Activated B cell treated with CpG ODN at 0.5 μM for 24 hours (primary cell): ENCODE measurements at regions of chr3 and their contacts with region 1.

Region 1: DNA sequence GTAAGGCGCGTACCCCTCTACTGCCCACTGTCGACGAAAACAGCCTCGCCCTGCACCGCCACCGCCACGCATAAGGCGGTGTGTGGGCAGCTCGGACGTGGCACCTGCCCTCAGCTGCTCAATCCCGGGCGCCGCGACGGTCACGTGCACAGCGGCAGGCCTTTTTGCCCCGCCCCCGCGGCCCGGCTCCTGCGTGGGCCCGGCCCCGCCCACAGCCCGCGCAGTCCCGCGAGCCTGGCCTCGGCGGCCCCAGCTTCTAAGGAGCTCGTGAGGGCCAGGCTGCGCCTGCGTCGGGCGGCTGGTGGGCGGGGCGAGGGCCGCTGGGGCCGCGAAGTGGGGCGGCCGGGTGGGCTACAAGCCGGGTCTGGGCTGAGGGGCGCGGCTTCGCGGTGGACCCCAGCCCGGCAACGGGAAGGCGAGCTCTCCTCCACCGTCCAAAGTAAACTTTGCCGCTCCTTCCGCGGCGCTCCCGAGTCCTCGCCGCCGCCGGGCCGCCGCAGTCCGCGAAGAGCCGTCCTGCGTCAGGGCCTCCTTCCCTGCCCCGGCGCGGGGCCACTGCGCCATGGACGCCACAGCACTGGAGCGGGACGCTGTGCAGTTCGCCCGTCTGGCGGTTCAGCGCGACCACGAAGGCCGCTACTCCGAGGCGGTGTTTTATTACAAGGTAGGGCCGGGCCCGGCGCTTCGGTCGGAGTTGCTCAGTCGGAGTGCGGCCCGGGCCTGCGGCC is at the start of gene CAPN7:
- DNase-seq: peak; percentile 97
- ATAC-seq: peak; percentile 90
- H3K4me3 Mint-ChIP-seq: peak within 1 kb of the TSS; percentile 89
- H3K27ac Mint-ChIP-seq: peak within 1 kb of the TSS; percentile 87
- H3K4me1 Mint-ChIP-seq: peaks cover 24% of the 10 kb centered on the region
- H3K27me3 Mint-ChIP-seq: no peaks in the 10 kb centered on the region
- CTCF ChIP-seq: no peak
- total RNA-seq, gene CAPN7: 35.0 and 45.1 TPM in 2 replicates

Region 2: GRCh38 chr3:14921078-14921616 is 285.0 kb before region 1 on chr3:
- CTCF ChIA-PET with region 1: interaction called, 14 read pairs
- POLR2A ChIA-PET with region 1: no interaction called
- intact Hi-C with region 1: loop called (anchors 2 kb)
- DNase-seq: peak; percentile 72
- ATAC-seq: peak; percentile 98
- H3K4me3 Mint-ChIP-seq: no peak overlapping the region
- H3K27ac Mint-ChIP-seq: no peak overlapping the region
- H3K4me1 Mint-ChIP-seq: no peaks in the 10 kb centered on the region
- H3K27me3 Mint-ChIP-seq: peaks cover 5% of the 10 kb centered on the region
- CTCF ChIP-seq: peak; percentile 40

Region 3: DNA sequence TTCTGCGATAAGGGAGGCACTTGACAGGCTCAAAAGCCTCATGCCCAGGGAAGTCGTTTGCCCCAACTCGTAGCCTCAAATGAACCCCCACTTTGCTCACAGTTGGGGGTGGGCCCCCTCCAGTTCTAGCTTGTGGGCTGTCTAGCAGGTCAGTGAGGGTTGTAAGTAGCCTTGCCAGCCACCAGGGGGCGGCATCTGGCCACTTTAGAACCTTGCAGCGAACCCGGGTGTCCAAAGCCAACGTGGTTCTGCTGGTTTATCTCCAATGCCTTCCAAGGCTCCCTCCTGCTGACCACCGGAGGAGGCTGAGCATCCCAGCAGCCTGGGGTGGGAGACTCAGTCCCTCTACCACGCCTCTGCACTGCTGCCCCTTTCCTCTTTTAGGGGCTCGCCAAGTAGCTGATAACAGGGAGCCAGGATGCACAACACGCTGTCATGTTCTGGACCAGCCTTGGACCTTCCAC is 98.0 kb before region 1 on chr3:
- CTCF ChIA-PET with region 1: interaction called, 18 read pairs
- POLR2A ChIA-PET with region 1: interaction called, 3 read pairs
- intact Hi-C with region 1: loop called (anchors 2 kb)
- DNase-seq: peak; percentile 66
- ATAC-seq: peak; percentile 98
- H3K4me3 Mint-ChIP-seq: no peak overlapping the region
- H3K27ac Mint-ChIP-seq: no peak overlapping the region
- H3K4me1 Mint-ChIP-seq: peaks cover 2% of the 10 kb centered on the region
- H3K27me3 Mint-ChIP-seq: peaks cover 7% of the 10 kb centered on the region
- CTCF ChIP-seq: peak; percentile 69

Region 4: DNA sequence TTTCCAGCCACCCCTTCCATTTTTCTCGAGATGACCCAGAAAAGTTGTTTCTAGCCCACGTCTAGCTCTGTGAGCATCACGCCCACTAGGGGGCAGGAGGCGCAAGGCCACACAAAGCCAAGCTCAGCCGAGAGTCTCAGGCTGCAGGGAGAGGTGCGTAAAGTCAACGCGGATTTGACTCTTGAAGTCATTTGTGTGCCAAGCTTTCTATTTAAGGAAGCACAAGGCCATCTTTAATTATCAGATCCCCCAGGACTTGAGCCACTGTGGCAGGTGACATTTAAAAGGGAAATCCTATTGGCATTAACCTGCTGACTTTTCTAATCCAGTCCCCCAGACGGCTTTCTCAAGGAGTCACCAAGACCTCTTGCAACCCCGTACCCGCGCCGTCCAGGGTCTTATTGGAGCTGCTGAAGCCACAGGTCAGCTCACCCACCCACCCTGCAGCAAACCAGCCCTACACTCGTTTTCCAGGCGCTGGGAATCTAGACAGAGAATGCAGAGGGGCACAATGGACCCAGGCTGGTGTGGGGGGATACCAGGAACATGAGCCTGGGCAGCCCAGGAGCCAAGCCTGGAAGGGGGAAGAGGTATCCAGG is 62.0 kb after region 1 on chr3:
- CTCF ChIA-PET with region 1: interaction called, 23 read pairs
- POLR2A ChIA-PET with region 1: interaction called, 7 read pairs
- intact Hi-C with region 1: loop called (anchors 2 kb)
- DNase-seq: peak; percentile 70
- ATAC-seq: peak; percentile 40
- H3K4me3 Mint-ChIP-seq: peak overlapping the region; percentile 46
- H3K27ac Mint-ChIP-seq: no peak overlapping the region
- H3K4me1 Mint-ChIP-seq: peaks cover 89% of the 10 kb centered on the region
- H3K27me3 Mint-ChIP-seq: no peaks in the 10 kb centered on the region
- CTCF ChIP-seq: peak; percentile 65

Region 5: GRCh38 chr3:15557511-15557946 is 351.4 kb after region 1 on chr3:
- CTCF ChIA-PET with region 1: interaction called, 36 read pairs
- POLR2A ChIA-PET with region 1: interaction called, 6 read pairs
- intact Hi-C with region 1: loop called (anchors 1 kb)
- DNase-seq: peak; percentile 19
- ATAC-seq: peak; percentile 81
- H3K4me3 Mint-ChIP-seq: no peak overlapping the region
- H3K27ac Mint-ChIP-seq: no peak overlapping the region
- H3K4me1 Mint-ChIP-seq: peaks cover 29% of the 10 kb centered on the region
- H3K27me3 Mint-ChIP-seq: no peaks in the 10 kb centered on the region
- CTCF ChIP-seq: no peak

Region 6: GRCh38 chr3:15815696-15816095 is 609.6 kb after region 1 on chr3:
- CTCF ChIA-PET with region 1: interaction called, 14 read pairs
- POLR2A ChIA-PET with region 1: no interaction called
- intact Hi-C with region 1: loop called (anchors 1 kb)
- DNase-seq: no peak
- ATAC-seq: no peak
- H3K4me3 Mint-ChIP-seq: no peak overlapping the region
- H3K27ac Mint-ChIP-seq: no peak overlapping the region
- H3K4me1 Mint-ChIP-seq: peaks cover 28% of the 10 kb centered on the region
- H3K27me3 Mint-ChIP-seq: no peaks in the 10 kb centered on the region
- CTCF ChIP-seq: no peak

Region 7: GRCh38 chr3:16264708-16265454 is 1058.8 kb after region 1 on chr3 and contains the starts of genes DPH3 and OXNAD1:
- CTCF ChIA-PET with region 1: no interaction called
- POLR2A ChIA-PET with region 1: interaction called, 5 read pairs
- intact Hi-C with region 1: loop called (anchors 5 kb)
- DNase-seq: peak; percentile 99
- ATAC-seq: peak; percentile 96
- H3K4me3 Mint-ChIP-seq: peak within 1 kb of the TSS; percentile 100
- H3K27ac Mint-ChIP-seq: peak within 1 kb of the TSS; percentile 100
- H3K4me1 Mint-ChIP-seq: peaks cover 25% of the 10 kb centered on the region
- H3K27me3 Mint-ChIP-seq: no peaks in the 10 kb centered on the region
- CTCF ChIP-seq: no peak
- total RNA-seq, gene DPH3: 13.4 and 14.7 TPM in 2 replicates
- total RNA-seq, gene OXNAD1: 5.5 and 8.7 TPM in 2 replicates